ENCODE measurements at regions of chr9 and their contacts with region 1.

Region 1: DNA sequence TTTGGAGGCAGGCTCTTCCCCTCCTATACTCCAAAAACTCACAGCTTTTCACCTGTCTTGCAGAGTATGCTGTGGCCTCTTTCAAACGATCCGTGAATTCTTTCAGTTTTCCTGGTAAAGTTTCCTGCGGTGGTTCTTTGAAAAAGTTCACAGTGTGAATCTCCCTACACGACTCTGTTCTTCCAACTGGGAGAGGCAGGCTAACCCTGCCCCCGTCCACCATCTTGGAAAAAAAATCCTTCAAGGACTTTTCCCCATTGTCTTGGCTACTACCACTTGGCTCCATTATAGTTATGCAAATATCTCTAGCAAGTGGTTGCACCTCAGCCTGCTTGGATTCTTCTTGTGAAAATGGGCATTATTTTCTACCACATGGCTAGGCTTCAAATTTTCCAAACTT is 382.6 kb downstream of the AGTPBP1 start:
- DNase-seq: no peak
- H3K4me3 ChIP-seq: no peak overlapping the region
- H3K27ac ChIP-seq: no peak overlapping the region
- H3K4me1 ChIP-seq: no peaks in the 10 kb centered on the region
- H3K27me3 ChIP-seq: no peaks in the 10 kb centered on the region; the same call in 1 of the 2 replicates
- CTCF ChIP-seq: no peak

Region 2: GRCh38 chr9:85024374-85024773 is 334.8 kb before region 1 on chr9:
- CTCF ChIA-PET with region 1: no interaction called
- POLR2A ChIA-PET with region 1: no interaction called
- intact Hi-C with region 1: no loop called
- DNase-seq: no peak
- H3K4me3 ChIP-seq: no peak overlapping the region
- H3K27ac ChIP-seq: no peak overlapping the region
- H3K4me1 ChIP-seq: no peaks in the 10 kb centered on the region
- H3K27me3 ChIP-seq: peaks cover 10% of the 10 kb centered on the region; the same call in 1 of the 2 replicates
- CTCF ChIP-seq: no peak

Region 3: DNA sequence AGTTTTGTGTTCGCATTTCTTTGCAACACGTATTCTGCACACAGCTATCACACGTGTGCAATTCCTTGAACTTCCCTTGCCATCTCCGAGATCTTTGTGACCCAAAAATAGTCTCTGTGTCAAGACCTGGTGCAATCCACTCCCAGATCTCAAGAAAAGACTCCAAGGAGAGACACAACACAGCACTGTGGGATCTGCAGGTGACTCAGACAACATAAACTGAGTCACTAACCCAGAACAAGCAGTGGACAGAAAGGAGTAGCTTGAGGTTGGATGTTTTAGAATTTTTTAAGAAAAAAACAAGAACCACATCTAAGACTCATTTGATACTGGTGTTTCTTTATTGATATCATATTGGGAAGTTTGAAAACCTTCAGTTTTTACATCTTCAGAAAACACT is 14.3 kb before region 1 on chr9:
- CTCF ChIA-PET with region 1: no interaction called
- POLR2A ChIA-PET with region 1: no interaction called
- intact Hi-C with region 1: loop called (anchors 1 kb)
- DNase-seq: no peak
- H3K4me3 ChIP-seq: no peak overlapping the region
- H3K27ac ChIP-seq: no peak overlapping the region
- H3K4me1 ChIP-seq: no peaks in the 10 kb centered on the region
- H3K27me3 ChIP-seq: peaks cover 33% of the 10 kb centered on the region
- CTCF ChIP-seq: no peak

Region 4: GRCh38 chr9:86885232-86885631 is 1526.1 kb after region 1 on chr9:
- CTCF ChIA-PET with region 1: no interaction called
- POLR2A ChIA-PET with region 1: no interaction called
- intact Hi-C with region 1: no loop called
- DNase-seq: no peak
- H3K4me3 ChIP-seq: no peak overlapping the region
- H3K27ac ChIP-seq: no peak overlapping the region
- H3K4me1 ChIP-seq: no peaks in the 10 kb centered on the region
- H3K27me3 ChIP-seq: no peaks in the 10 kb centered on the region
- CTCF ChIP-seq: no peak

Measured in PC-9 (cell line).